Heart right ventricle (tissue), 16 donors: ENCODE measurements at regions of chr7 and their contacts with region 1.

Region 1: DNA sequence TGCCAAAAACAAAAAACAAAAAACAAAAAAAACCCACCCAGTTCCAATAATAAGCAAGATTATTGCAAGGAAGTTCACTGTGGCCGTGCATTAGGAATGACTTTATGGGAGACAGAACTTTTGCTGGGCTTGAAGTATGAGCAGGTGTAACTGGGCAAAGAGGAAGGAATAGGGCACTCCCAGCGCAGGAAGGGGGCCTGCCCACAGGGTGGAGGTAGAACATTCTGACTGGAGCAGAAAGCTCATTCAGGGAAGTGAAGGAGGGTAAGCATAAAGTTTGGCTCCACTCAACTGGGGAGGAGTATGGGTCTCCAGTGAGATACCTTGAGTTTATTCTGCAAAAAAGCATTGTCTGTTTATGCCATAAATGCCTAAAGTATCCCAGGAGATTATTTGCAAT is 42.1 kb upstream of the WIPF3 start:
- DNase-seq: no peak
- ATAC-seq: no peak
- H3K4me3 ChIP-seq: no peak overlapping the region
- H3K27ac ChIP-seq: no peak overlapping the region
- H3K4me1 ChIP-seq: peaks cover 0 to 5% (median 0%) of the 10 kb centered on the region in 9 donors
- H3K27me3 ChIP-seq: peaks cover 0 to 4% (median 0%) of the 10 kb centered on the region in 7 donors
- CTCF ChIP-seq: peak in 6 of 9 donors; percentile 6 to 42 (median 32)

Region 2: GRCh38 chr7:30068067-30068466 is 303.8 kb after region 1 on chr7:
- intact Hi-C with region 1: loop called in 2 of 10 experiments (anchors 5 to 10 kb)
- DNase-seq: no peak
- ATAC-seq: peak in 7 of 8 donors; percentile 61 to 86 (median 67)
- H3K4me3 ChIP-seq: no peak overlapping the region
- H3K27ac ChIP-seq: peak overlapping the region in 1 of 10 donors; percentile 34
- H3K4me1 ChIP-seq: peaks cover 0 to 31% (median 8%) of the 10 kb centered on the region in 9 donors
- H3K27me3 ChIP-seq: no peaks in the 10 kb centered on the region
- CTCF ChIP-seq: no peak